ENCODE measurements at regions of chr20 and their contacts with region 1.

Region 1: GRCh38 chr20:22691369-22692118 is 107.2 kb upstream of the FOXA2 start:
- DNase-seq: peak; percentile 89
- H3K4me3 ChIP-seq: peak overlapping the region; percentile 13 to 36
- H3K27ac ChIP-seq: peak overlapping the region; percentile 9 to 46
- H3K4me1 ChIP-seq: peaks cover 13% of the 10 kb centered on the region
- H3K27me3 ChIP-seq: no peaks in the 10 kb centered on the region
- CTCF ChIP-seq: peak; percentile 79 to 93 (median 90)
- POLR2A ChIP-seq: no peak

Region 2: DNA sequence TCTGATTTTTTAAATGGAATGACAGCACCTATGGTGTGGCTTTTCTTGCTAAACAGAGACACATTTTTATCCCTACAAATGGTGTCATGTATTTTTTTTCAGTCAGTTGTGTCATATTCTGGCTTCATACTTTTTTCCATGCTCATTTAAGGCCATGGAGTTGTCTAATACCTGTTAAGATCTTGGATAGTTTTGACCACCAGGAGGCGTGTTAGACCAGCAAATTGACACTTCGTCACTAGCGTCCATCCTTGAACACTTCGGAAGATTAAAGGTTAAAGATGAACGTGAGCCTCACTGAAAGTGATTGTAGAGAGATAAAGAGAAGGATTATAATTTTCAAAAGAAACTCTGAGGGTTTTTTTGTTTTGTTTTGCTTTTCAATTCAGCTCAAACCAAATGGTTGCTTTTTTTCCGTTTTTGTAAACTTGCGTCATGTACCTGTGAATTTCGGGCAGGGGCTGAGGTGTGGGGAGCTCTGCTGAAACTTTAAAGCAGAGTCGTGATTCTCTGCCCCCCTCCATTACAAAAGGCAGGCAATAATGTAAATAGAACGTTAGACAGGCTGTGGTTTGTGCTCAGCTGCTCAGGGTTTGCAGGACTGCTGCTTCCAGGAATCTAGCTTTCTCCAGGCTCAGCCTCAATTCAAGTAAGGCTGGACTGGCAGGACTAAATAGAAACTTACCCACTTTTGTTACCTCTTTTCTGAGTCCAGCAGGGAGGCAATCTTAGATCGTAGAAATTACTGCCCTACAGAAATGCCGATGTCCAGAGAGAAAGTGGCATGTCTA is 352.3 kb before region 1 on chr20:
- intact Hi-C with region 1: no loop called
- DNase-seq: peak; percentile 72
- H3K4me3 ChIP-seq: no peak overlapping the region
- H3K27ac ChIP-seq: no peak overlapping the region
- H3K4me1 ChIP-seq: peaks cover 6% of the 10 kb centered on the region
- H3K27me3 ChIP-seq: no peaks in the 10 kb centered on the region
- CTCF ChIP-seq: peak; percentile 75 to 77 (median 76)
- POLR2A ChIP-seq: no peak

Region 3: DNA sequence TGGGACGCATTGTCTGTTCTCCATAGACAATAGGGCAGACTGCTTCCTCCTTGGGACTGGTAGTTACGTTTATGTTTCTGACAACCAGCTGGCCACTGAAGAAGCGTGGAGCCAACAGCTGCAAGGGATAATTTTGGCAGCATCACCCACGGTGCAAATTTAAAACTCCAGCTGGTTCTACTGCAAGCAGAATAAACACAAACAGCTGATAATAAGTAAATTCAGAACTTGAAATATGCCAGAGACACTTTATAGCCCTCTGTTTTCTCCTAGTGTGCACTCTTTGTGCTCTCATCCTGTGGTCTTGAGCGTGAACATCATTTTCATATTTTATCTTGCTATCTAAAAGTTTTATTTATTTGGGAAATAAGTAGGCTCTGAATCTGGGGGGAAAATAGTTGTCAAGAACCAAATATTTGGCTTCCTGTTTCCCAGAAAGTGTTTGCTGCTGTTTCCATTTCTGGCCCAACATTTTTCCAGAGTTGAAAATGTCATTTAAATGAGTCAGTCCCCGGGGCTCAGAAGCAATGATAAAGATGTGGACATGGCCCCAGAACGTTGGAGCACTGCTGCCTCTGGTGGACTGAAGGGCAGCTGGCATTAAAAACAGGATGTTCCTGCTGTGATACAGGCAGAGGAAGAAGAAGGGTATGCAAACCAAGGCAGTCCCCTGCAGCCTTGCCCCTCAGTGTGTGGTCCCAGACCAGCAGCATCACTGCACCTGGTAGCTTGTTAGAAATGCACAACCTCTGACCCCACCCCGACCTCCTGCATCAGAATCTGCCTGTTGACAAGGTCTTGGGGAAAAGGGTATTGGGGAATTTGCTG is 370.4 kb after region 1 on chr20:
- intact Hi-C with region 1: loop called (anchors 10 kb)
- DNase-seq: peak; percentile 67
- H3K4me3 ChIP-seq: no peak overlapping the region
- H3K27ac ChIP-seq: peak overlapping the region in 1 of 2 donors; percentile 20
- H3K4me1 ChIP-seq: peaks cover 24% of the 10 kb centered on the region
- H3K27me3 ChIP-seq: no peaks in the 10 kb centered on the region
- CTCF ChIP-seq: peak in 1 of 3 experiments; percentile 14
- POLR2A ChIP-seq: no peak

Region 4: DNA sequence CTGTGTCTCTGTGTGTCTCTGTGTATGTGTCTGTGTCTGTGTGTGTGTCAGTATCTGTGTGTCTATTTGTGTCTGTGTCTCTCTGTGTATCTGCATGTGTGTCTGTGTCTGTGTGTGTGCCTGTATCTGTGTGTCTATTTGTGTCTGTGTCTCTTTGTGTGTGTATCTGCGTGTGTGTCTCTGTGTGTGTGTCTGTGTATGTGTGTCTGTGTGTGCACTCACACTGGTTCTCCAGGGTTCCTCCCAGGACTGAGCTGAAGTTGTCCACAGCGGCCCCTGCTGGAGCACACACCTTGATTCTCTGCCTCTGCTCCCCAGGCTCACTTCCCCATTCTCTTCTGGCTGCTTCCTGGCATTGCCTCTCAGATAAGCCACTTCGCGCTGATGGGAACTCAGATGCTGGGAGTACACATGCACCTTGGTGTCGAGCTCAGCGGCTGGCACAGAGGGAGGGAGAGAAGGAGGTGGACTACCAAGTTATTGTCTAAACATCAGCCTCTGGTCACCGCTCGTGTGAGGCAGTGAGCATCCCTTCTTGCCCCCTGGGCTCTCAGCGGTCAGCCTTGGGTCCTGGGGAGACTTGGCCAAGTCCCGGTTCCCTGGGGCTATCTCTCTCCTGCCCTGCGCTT is 554.1 kb after region 1 on chr20:
- intact Hi-C with region 1: loop called (anchors 10 kb)
- DNase-seq: peak; percentile 53
- H3K4me3 ChIP-seq: no peak overlapping the region
- H3K27ac ChIP-seq: peak overlapping the region in 1 of 2 donors; percentile 36
- H3K4me1 ChIP-seq: peaks cover 18% of the 10 kb centered on the region
- H3K27me3 ChIP-seq: no peaks in the 10 kb centered on the region
- CTCF ChIP-seq: peak in 2 of 3 experiments; percentile 15 to 34
- POLR2A ChIP-seq: no peak

Region 5: GRCh38 chr20:23331450-23332350 is 640.2 kb after region 1 on chr20:
- intact Hi-C with region 1: loop called (anchors 10 kb)
- DNase-seq: no peak
- H3K4me3 ChIP-seq: no peak overlapping the region
- H3K27ac ChIP-seq: no peak overlapping the region
- H3K4me1 ChIP-seq: no peaks in the 10 kb centered on the region
- H3K27me3 ChIP-seq: no peaks in the 10 kb centered on the region
- CTCF ChIP-seq: no peak
- POLR2A ChIP-seq: no peak